B cell (primary cell): ENCODE measurements at regions of chr5 and their contacts with region 1.

Region 1: GRCh38 chr5:151134238-151134637 is 23.3 kb downstream of the ANXA6 start:
- DNase-seq: no peak
- ATAC-seq: peak; percentile 37
- H3K4me3 ChIP-seq: peak overlapping the region in 1 of 5 experiments; percentile 7
- H3K4me3 Mint-ChIP-seq: peak overlapping the region; percentile 62
- H3K27ac ChIP-seq: peak overlapping the region; percentile 48 to 70
- H3K27ac Mint-ChIP-seq: peak overlapping the region; percentile 87
- H3K4me1 ChIP-seq: peaks cover 40 to 76% of the 10 kb centered on the region in 2 donors
- H3K4me1 Mint-ChIP-seq: peaks cover 81% of the 10 kb centered on the region
- H3K27me3 ChIP-seq: no peaks in the 10 kb centered on the region
- H3K27me3 Mint-ChIP-seq: no peaks in the 10 kb centered on the region
- CTCF ChIP-seq: no peak

Region 2: GRCh38 chr5:151041577-151042268 is 92.5 kb before region 1 on chr5:
- CTCF ChIA-PET with region 1: no interaction called
- POLR2A ChIA-PET with region 1: no interaction called
- intact Hi-C with region 1: no loop called
- DNase-seq: no peak
- ATAC-seq: no peak
- H3K4me3 ChIP-seq: no peak overlapping the region
- H3K4me3 Mint-ChIP-seq: no peak overlapping the region
- H3K27ac ChIP-seq: no peak overlapping the region
- H3K27ac Mint-ChIP-seq: no peak overlapping the region
- H3K4me1 ChIP-seq: no peaks in the 10 kb centered on the region
- H3K4me1 Mint-ChIP-seq: no peaks in the 10 kb centered on the region
- H3K27me3 ChIP-seq: no peaks in the 10 kb centered on the region
- H3K27me3 Mint-ChIP-seq: no peaks in the 10 kb centered on the region
- CTCF ChIP-seq: no peak

Region 3: DNA sequence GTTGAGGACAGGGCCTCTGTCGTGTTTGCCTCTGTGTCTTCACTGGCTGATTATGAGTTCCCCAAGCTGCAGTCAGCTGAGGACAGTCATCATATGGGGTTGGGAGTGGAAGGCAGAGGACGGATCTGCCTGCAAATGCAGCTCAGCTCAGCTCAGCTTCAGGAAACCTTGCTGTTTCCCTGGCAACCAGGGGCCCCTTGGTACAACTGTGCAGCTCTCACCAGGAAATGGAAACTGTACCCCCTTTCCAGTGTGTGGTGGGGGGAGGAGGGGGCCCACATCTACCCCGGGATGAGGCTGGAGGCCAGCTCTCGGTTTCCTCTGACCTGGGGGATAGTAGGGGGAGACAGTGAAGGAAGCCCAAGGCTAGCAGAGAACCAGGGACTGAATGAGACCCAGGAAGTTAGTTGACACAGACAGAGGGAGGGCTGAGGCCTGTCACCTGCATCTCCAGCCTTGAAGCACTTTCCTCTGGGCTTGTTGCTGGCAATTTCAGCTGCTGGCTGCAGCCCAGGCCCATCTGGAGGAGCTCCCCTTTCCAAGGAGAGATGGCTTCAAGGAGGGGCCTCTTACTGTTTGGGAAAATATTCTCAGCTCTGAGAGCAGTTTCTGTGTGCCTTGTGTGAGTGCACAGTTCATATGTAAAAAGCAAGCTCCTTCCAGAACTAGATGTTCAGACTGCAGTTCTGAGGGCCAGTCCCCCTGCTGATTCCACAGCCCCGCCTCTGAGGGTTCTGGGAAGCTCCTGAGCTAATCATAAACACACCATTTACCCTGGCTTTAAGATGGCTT is 16.4 kb after region 1 on chr5:
- CTCF ChIA-PET with region 1: interaction called, 1,701 read pairs
- POLR2A ChIA-PET with region 1: interaction called, 11 read pairs
- intact Hi-C with region 1: no loop called
- DNase-seq: peak; percentile 61
- ATAC-seq: peak; percentile 69
- H3K4me3 ChIP-seq: peak overlapping the region in 3 of 5 experiments; percentile 9 to 22 (median 18)
- H3K4me3 Mint-ChIP-seq: peak overlapping the region; percentile 69
- H3K27ac ChIP-seq: peak overlapping the region; percentile 74 to 91
- H3K27ac Mint-ChIP-seq: peak overlapping the region; percentile 93
- H3K4me1 ChIP-seq: peaks cover 100% of the 10 kb centered on the region in 2 donors
- H3K4me1 Mint-ChIP-seq: peaks cover 97% of the 10 kb centered on the region
- H3K27me3 ChIP-seq: no peaks in the 10 kb centered on the region
- H3K27me3 Mint-ChIP-seq: no peaks in the 10 kb centered on the region
- CTCF ChIP-seq: no peak